ENCODE measurements at regions of chr14 and their contacts with region 1.

Region 1: GRCh38 chr14:24289649-24290249 is 9.8 kb downstream of the DHRS1 start:
- DNase-seq: no peak
- H3K4me3 ChIP-seq: no peak overlapping the region
- CTCF ChIP-seq: no peak

Region 2: DNA sequence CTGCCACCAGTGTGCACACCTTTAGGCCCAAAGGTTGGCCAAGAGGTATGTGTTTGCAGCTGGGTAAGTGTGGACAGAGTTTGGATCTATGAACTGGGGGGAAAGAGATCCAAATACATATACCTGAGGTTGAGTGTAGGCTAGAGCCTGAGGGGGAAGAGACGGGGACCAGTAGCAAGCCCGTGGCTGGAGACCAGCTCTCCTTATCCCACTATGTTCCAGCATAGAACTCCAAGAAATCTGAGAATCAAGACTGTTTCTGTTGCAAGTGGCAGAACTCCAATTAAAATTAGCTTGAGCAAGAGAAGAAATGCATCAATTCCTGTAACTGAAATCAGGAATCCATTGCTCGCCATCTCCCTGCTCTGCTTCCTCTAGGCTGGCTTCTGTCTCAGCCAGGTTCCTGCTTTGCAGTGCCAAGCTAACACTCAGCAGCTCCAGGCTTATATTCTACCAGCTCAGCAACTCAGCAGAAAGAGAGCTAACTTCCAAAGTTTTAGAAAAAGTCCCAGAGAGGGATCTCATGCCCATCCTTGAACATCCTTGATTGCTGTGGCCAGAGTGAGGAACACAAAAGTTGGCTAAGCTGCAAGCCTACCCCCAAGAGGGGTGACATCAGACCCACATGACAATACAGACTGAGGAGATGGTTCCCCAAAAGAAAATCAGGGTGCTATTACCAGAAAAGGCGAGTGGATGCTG is 197.1 kb before region 1 on chr14:
- CTCF ChIA-PET with region 1: no interaction called
- POLR2A ChIA-PET with region 1: no interaction called
- DNase-seq: no peak
- H3K4me3 ChIP-seq: no peak overlapping the region
- CTCF ChIP-seq: no peak

Region 3: GRCh38 chr14:24279301-24280186 is 10.2 kb before region 1 on chr14:
- CTCF ChIA-PET with region 1: interaction called, 13 read pairs
- POLR2A ChIA-PET with region 1: no interaction called
- DNase-seq: no peak
- H3K4me3 ChIP-seq: no peak overlapping the region
- CTCF ChIP-seq: no peak